Left colon (tissue), 2 donors: ENCODE measurements at regions of chr1 and their contacts with region 1.

Region 1: GRCh38 chr1:108799001-108799400 is 52.5 kb downstream of the STXBP3 start:
- DNase-seq: no peak
- ATAC-seq: no peak

Region 2: GRCh38 chr1:108814343-108815125 is 15.5 kb after region 1 on chr1:
- intact Hi-C with region 1: loop called in 1 of 2 experiments (anchors 2 kb)
- DNase-seq: no peak
- ATAC-seq: no peak

Region 3: DNA sequence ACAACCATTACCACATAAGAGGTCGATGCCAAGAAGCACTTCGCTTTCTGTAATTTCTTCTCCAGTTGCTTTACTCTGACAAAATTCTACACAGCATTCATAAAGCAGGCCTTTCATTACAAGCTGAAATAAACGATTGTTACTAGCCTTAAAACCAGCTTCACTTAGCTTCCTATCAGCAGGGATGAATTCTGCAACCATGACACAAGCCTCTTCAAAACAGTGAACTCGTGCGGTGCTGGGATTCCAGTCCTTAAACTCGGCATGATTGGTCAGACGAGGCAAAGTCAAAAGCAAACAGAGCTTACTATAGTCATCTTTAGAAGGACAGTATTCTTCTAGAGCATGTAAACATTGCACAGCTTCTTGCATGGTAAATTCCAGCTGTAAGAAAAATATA is 212.3 kb after region 1 on chr1:
- intact Hi-C with region 1: no loop called
- DNase-seq: no peak
- ATAC-seq: no peak